ENCODE measurements at regions of chr7 and their contacts with region 1.

Region 1: DNA sequence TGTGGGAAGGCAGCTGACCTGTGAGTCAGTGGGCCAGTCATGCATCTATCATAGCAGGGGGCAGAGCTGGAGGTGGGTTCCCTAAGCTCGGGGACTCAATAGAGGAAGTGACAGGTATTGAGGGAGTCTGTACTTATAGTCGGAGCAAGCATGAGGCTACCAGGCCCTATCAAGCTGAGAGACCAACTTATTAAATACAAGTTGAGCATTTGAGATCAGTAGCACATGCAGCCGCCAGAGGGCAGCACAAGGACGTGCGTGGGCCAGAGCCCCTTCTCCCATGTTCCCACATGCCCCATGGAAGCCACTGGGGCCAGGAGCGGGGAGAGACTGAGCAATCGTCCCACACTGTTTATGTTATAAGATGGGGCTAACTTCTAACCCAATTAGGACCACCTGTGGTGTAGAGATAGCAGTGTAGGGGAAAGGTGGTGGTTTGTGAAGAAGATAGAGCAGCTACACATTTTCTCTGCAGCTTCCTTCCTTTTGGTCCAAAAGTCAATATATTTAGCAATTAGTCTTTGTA is 13.0 kb upstream of the STK31 start:
- H3K4me3 ChIP-seq: no peak overlapping the region
- H3K27ac ChIP-seq: no peak overlapping the region
- H3K4me1 ChIP-seq: no peaks in the 10 kb centered on the region
- CTCF ChIP-seq: peak; percentile 39; the same call in 1 of the 2 replicates

Region 2: GRCh38 chr7:22822486-22823141 is 874.4 kb before region 1 on chr7 and contains the start of gene TOMM7:
- CTCF ChIA-PET with region 1: no interaction called
- POLR2A ChIA-PET with region 1: no interaction called
- H3K4me3 ChIP-seq: peak within 1 kb of the TSS; percentile 60
- H3K27ac ChIP-seq: peak within 1 kb of the TSS; percentile 47; the same call in 1 of the 2 replicates
- H3K4me1 ChIP-seq: no peaks in the 10 kb centered on the region
- CTCF ChIP-seq: peak; percentile 72

Region 3: DNA sequence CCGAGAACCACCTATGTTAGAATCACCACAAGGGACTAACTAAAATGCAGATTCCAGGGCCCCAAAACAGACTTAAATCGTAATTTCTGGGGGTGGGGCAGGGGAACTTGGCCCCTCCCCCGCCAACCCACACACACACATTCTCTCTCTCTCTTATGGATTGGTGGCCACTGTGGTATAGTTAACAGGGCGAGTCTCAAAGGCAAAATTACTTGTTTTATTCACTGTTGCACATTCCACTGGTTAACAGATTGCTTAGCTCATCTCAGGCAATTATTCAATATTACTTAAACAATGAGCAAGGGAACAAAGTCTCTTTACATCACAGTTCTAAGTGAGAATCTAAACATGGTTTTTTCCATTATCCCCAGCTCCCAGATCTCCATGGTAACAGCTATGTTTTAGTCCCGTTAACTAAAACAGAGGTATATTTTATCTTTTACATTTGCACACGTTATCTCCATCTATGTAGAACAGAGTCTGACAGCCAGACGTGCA is 265.2 kb before region 1 on chr7:
- CTCF ChIA-PET with region 1: no interaction called
- POLR2A ChIA-PET with region 1: no interaction called
- H3K4me3 ChIP-seq: no peak overlapping the region
- H3K27ac ChIP-seq: no peak overlapping the region; the same call in 1 of the 2 replicates
- H3K4me1 ChIP-seq: peaks cover 26% of the 10 kb centered on the region
- CTCF ChIP-seq: no peak

Region 4: GRCh38 chr7:23570592-23571200 is 126.3 kb before region 1 on chr7:
- CTCF ChIA-PET with region 1: interaction called, 14 read pairs
- POLR2A ChIA-PET with region 1: no interaction called
- H3K4me3 ChIP-seq: no peak overlapping the region
- H3K27ac ChIP-seq: no peak overlapping the region
- H3K4me1 ChIP-seq: no peaks in the 10 kb centered on the region
- CTCF ChIP-seq: peak; percentile 68; the same call in 1 of the 2 replicates

Region 5: GRCh38 chr7:23672033-23672432 is 24.9 kb before region 1 on chr7:
- CTCF ChIA-PET with region 1: interaction called, 10 read pairs
- POLR2A ChIA-PET with region 1: no interaction called
- H3K4me3 ChIP-seq: no peak overlapping the region
- H3K27ac ChIP-seq: no peak overlapping the region
- H3K4me1 ChIP-seq: no peaks in the 10 kb centered on the region
- CTCF ChIP-seq: no peak

Region 6: DNA sequence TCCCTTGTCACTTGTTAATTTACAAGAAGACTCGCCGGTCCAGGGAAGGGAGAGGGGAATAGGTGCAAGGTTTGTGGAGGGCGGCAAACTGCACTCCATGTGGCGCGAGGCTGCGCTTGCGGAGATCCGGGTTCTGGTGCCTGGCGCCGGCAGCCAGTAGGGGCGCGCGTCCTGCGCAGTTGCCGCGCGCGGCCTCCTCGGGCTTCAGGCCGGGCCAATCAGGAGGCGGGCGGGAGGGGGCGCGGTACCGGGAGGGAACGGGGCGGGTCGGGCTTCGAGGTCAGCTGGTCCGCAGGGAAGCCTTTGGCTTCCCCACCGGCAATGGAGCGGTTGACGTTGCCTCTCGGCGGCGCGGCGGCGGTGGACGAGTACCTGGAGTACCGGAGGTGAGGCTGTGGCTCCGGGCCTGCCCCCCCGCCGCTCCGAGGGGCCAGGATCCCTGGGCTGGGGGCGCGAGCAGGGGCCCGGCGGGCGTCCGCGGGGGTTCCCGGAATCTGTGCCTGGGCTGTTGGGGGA is 17.0 kb before region 1 on chr7 and contains the start of gene FAM221A:
- CTCF ChIA-PET with region 1: interaction called, 39 read pairs
- POLR2A ChIA-PET with region 1: no interaction called
- H3K4me3 ChIP-seq: peak within 1 kb of the TSS; percentile 40
- H3K27ac ChIP-seq: peak within 1 kb of the TSS; percentile 77
- H3K4me1 ChIP-seq: 0 out of 2 replicates have a peak, but pooled peaks cover 5% of the 10 kb centered on the region
- CTCF ChIP-seq: peak; percentile 83

Region 7: DNA sequence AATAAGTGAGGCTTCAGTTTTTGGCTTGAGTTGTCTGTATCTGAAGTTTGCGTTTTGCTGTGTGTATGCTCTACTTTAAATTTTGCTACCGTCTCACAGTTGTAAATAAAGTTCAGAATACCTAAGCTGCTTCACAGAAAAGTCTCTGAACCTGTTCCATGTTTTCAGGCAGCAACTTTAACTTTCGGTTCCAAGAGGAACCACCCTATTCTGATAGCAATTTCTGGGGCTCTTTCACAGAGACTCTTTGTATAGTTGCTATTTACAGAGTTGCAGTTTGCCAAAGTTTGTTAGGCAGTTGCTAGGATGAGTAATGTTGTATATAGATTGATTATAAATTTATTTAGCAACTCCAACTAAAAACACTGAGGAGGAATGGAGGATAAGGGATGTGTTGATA is 11.2 kb before region 1 on chr7:
- CTCF ChIA-PET with region 1: interaction called, 39 read pairs
- POLR2A ChIA-PET with region 1: no interaction called
- H3K4me3 ChIP-seq: no peak overlapping the region
- H3K27ac ChIP-seq: no peak overlapping the region
- H3K4me1 ChIP-seq: 0 out of 2 replicates have a peak, but pooled peaks cover 4% of the 10 kb centered on the region
- CTCF ChIP-seq: no peak

Region 8: DNA sequence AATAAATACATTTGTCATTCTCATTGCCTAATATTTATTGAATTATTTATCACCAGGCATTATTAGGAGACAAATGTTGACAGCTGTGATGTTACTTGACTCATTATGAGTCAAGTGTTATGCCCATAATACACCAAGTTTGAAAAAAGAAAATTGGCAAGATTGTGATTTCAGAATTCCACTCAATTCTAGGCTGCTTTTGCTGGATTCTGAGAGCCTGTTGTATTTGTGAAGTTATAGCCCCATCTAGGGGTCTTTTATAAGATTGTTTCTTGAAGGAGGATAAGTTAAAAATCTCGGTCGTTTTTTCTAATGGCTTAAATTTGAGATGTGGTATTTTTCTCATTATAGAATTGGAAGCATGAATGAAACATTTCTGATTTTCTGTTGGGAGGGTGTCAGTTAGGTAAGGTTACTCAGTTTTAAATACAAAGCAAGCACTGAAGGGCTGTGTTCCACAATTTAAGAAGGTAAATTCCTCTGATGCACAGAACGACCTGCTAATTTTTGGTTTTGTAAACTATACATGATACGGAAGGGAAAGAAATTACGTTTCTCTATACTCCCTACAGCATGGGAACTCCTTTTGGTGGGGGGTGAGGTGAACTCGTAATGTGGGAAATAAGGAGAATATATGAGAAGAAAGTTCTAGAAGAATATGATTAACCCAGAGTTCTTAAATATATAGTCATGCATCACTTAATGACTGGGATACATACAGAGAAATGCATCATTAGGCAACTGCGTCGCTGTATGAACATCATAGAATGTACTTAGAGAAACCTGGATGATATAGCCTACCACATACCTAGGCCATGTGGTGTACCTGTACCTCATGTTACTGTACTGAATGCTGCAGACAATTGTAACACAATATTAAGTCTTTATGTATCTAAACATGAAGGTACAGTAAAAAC is 15.6 kb after region 1 on chr7:
- CTCF ChIA-PET with region 1: interaction called, 67 read pairs
- POLR2A ChIA-PET with region 1: no interaction called
- H3K4me3 ChIP-seq: no peak overlapping the region
- H3K27ac ChIP-seq: no peak overlapping the region
- H3K4me1 ChIP-seq: no peaks in the 10 kb centered on the region
- CTCF ChIP-seq: 0 out of 2 replicates have a peak, but pooled peaks have one; percentile 12